ENCODE measurements at regions of chr10 and their contacts with region 1.

Region 1: GRCh38 chr10:29304264-29305030 is 15.6 kb downstream of the LYZL1 start:
- DNase-seq: peak in 1 of 2 donors; percentile 54
- H3K4me3 ChIP-seq: peak overlapping the region in 1 of 3 donors; percentile 27
- H3K27ac ChIP-seq: peak overlapping the region in 1 of 2 donors; percentile 19
- H3K4me1 ChIP-seq: no peaks in the 10 kb centered on the region
- H3K27me3 ChIP-seq: no peaks in the 10 kb centered on the region
- CTCF ChIP-seq: peak; percentile 41 to 86 (median 84)
- POLR2A ChIP-seq: no peak

Region 2: GRCh38 chr10:28668363-28669226 is 635.9 kb before region 1 on chr10:
- intact Hi-C with region 1: loop called (anchors 5 kb)
- DNase-seq: peak; percentile 33 to 58
- H3K4me3 ChIP-seq: peak overlapping the region; percentile 34 to 66 (median 53)
- H3K27ac ChIP-seq: no peak overlapping the region
- H3K4me1 ChIP-seq: no peaks in the 10 kb centered on the region
- H3K27me3 ChIP-seq: peaks cover 0 to 18% of the 10 kb centered on the region in 2 donors
- CTCF ChIP-seq: no peak
- POLR2A ChIP-seq: no peak